IMR-90 (cell line): ENCODE measurements at regions of chr1 and their contacts with region 1.

Region 1: DNA sequence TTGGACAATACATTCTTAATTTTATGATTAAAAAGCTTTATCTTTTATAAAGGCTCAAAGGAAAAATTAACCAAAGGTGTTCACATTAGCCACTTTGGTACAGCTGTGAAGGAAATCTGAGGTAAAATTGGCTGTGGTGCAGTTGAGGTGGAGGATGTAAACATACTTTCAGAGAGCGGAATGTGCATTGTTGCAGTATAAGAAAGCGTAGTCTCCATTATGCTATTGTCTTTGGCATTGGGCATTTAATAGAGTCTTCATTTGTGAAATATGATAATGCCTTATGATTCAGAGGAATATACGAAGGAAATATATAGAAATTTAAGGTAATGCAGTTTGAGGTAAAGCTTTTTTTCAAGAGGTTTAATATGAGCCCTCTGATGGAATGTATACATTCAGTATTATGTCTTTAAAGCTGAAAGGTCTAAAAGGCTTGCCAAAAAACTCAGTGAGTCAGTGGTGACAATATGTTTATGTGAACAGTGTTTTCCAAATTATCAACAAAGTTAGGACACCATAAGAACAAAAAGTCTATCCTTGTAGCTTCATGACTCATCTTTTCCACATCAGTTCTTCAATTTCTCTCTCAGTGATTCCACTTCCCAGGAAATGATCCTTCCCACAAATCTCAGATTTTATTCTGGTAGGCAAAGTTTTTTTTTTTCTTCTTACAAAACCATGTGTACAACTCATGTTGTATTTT is 26.9 kb upstream of the DDR2 start:
- DNase-seq: peak; percentile 98
- ATAC-seq: peak; percentile 81
- H3K4me3 ChIP-seq: no peak overlapping the region
- H3K27ac ChIP-seq: no peak overlapping the region
- H3K4me1 ChIP-seq: peaks cover 5% of the 10 kb centered on the region
- H3K27me3 ChIP-seq: no peaks in the 10 kb centered on the region
- CTCF ChIP-seq: no peak
- POLR2A ChIP-seq: no peak
- RAD21 ChIP-seq: no peak

Region 2: GRCh38 chr1:163307479-163308171 is 702.2 kb after region 1 on chr1:
- CTCF ChIA-PET with region 1: no interaction called
- POLR2A ChIA-PET with region 1: no interaction called
- dilution Hi-C with region 1: no loop called
- in situ Hi-C with region 1: no loop called
- intact Hi-C with region 1: no loop called
- DNase-seq: peak; percentile 88
- ATAC-seq: peak; percentile 89
- H3K4me3 ChIP-seq: no peak overlapping the region
- H3K27ac ChIP-seq: peak overlapping the region; percentile 25; the same call in 1 of the 2 replicates
- H3K4me1 ChIP-seq: peaks cover 3% of the 10 kb centered on the region; the same call in 1 of the 2 replicates
- H3K27me3 ChIP-seq: no peaks in the 10 kb centered on the region
- CTCF ChIP-seq: no peak
- POLR2A ChIP-seq: no peak
- RAD21 ChIP-seq: no peak

Region 3: DNA sequence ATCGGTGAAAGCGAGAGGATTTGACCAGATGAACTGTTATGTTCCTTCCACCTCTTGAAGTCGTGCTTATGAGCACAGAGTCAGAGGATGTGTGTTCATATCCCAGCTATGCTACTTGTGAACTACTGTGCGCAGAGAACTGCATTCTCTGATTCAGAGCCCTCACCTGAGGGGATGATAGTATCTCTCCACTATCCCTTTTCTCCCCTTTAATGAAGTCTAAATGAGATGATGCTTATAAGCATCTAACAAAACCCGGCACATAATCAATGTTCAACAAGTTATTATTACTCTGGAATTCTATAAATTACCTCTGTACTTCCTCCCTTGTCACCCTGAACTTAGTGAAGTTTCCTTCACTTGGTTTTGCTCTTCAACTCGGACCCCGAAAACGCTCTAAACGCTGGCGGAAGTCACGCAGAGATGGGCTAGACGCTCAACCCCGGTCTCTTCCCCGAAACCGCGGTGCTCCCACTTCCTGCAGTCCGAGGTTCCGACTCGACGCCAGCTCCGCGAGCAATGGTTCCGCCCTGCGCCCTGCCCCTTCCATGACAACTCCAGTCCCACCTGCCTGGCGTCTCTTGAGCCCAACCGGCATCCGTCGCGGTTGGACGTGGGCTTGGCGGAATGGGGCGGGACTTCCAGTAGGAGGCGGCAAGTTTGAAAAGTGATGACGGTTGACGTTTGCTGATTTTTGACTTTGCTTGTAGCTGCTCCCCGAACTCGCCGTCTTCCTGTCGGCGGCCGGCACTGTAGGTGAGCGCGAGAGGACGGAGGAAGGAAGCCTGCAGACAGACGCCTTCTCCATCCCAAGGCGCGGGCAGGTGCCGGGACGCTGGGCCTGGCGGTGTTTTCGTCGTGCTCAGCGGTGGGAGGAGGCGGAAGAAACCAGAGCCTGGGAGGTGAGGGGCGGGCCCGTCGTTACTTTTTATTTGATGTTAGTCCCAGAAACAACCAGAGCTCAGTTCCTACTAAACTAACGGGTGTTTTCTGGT is 716.2 kb after region 1 on chr1 and contains the start of gene NUF2:
- CTCF ChIA-PET with region 1: no interaction called
- POLR2A ChIA-PET with region 1: interaction called, 11 read pairs
- dilution Hi-C with region 1: no loop called
- in situ Hi-C with region 1: no loop called
- intact Hi-C with region 1: no loop called
- DNase-seq: peak; percentile 99
- ATAC-seq: peak; percentile 99
- H3K4me3 ChIP-seq: peak within 1 kb of the TSS; percentile 62
- H3K27ac ChIP-seq: peak within 1 kb of the TSS; percentile 23
- H3K4me1 ChIP-seq: peaks cover 3% of the 10 kb centered on the region; the same call in 1 of the 2 replicates
- H3K27me3 ChIP-seq: no peaks in the 10 kb centered on the region
- CTCF ChIP-seq: no peak
- POLR2A ChIP-seq: peak; percentile 83
- RAD21 ChIP-seq: no peak
- total RNA-seq, gene NUF2: 18.5 and 23.6 TPM in 2 replicates